CD4-positive, alpha-beta memory T cell (primary cell): ENCODE measurements at regions of chr1 and their contacts with region 1.

Region 1: GRCh38 chr1:206935491-206936067 is 10.7 kb downstream of the PIGR start:
- DNase-seq: peak in 1 of 5 donors; percentile 30
- H3K4me3 ChIP-seq: no peak overlapping the region
- H3K4me3 Mint-ChIP-seq: no peak overlapping the region
- H3K27ac ChIP-seq: no peak overlapping the region
- H3K27ac Mint-ChIP-seq: no peak overlapping the region
- H3K4me1 ChIP-seq: peaks cover 14% of the 10 kb centered on the region
- H3K4me1 Mint-ChIP-seq: peaks cover 9 to 25% (median 19%) of the 10 kb centered on the region in 4 donors
- H3K27me3 ChIP-seq: no peaks in the 10 kb centered on the region
- H3K27me3 Mint-ChIP-seq: no peaks in the 10 kb centered on the region

Region 2: DNA sequence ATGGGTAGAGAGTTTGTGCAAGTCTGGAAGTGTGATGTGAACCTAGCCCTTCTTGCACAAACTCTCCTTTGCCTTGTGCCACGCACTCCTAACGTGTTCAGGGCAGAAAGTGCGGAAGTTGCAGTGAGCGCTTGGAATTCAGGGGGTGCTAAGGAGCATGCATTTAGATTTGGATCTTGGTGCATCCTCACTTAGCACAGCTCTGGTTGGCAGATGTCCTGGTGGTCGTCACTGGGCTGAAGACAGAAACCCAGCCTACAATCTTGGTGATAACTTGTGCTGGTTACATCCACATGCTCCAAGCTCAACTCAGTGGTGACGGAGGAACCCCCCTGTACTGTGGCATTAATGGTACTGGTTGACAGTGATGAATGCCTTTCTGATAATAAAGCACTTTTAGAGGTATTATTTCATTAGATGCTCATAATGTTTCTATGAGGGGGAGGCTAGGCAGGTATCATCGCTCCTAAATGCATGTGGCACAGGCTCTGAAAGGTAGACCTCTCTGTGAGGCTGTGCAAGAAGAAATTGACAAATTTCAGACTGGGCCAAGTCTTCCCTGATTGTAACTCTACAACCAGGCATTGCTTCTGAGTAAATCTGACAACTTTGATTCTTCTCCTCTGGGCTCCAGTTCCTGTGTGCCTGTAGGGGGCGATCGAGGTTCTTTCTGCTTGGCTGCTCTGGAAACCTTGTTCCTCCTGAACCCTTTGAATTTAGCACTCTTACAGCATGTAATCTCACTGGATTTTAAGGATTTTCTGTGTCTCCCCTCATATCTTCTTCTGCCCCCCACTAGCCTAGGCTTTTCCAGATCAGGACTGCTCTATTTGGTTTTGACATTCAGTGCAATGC is 210.2 kb before region 1 on chr1:
- CTCF ChIA-PET with region 1: interaction called, 31 read pairs
- POLR2A ChIA-PET with region 1: no interaction called
- intact Hi-C with region 1: loop called (anchors 1 kb)
- DNase-seq: peak in 4 of 5 donors; percentile 47 to 60 (median 56)
- H3K4me3 ChIP-seq: no peak overlapping the region
- H3K4me3 Mint-ChIP-seq: peak overlapping the region in 2 of 8 donors; percentile 43 to 57
- H3K27ac ChIP-seq: no peak overlapping the region
- H3K27ac Mint-ChIP-seq: peak overlapping the region in 6 of 7 donors; percentile 60 to 90 (median 76)
- H3K4me1 ChIP-seq: peaks cover 32% of the 10 kb centered on the region
- H3K4me1 Mint-ChIP-seq: peaks cover 33 to 61% (median 46%) of the 10 kb centered on the region in 4 donors
- H3K27me3 ChIP-seq: no peaks in the 10 kb centered on the region
- H3K27me3 Mint-ChIP-seq: no peaks in the 10 kb centered on the region

Region 3: DNA sequence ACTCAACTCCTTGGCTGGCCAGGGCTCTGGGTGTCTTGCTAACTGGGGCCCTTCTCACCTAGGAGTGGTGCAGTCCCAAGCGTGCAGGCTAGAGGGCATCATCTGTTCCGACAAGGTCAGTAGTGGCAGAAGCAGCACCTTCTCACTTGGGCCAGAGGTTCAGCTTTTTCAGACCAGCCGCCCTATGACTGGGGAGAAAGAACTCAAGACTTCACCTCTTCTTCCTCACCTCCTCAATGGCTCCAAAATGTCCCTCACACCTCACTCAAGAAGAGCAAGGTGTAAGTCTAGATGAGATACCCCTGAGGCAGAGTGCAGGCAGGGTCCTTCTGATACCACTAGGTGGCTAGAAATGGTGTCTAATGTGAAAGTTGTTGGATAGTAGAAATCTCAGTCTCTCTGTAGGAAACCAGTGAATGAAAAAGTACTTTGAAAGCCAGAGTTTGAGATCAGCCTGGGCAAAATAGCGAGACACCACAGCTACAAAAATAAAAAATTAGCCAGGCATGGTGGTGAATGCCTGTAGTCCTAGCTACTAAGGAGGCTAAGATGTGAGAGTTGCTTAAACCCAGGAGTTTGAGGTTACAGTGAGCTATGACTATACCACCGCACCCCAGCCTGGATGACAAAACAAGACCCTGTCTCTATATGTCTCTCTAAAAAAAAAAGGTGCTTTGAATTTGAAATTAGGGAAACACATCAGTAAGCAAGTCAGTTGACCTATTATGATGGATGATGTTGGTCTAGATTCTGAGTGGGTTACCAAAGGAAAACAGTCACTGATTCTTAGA is 78.7 kb before region 1 on chr1:
- CTCF ChIA-PET with region 1: interaction called, 30 read pairs
- POLR2A ChIA-PET with region 1: interaction called, 3 read pairs
- intact Hi-C with region 1: no loop called
- DNase-seq: peak in 4 of 5 donors; percentile 8 to 22 (median 16)
- H3K4me3 ChIP-seq: no peak overlapping the region
- H3K4me3 Mint-ChIP-seq: no peak overlapping the region
- H3K27ac ChIP-seq: no peak overlapping the region
- H3K27ac Mint-ChIP-seq: no peak overlapping the region
- H3K4me1 ChIP-seq: peaks cover 7% of the 10 kb centered on the region
- H3K4me1 Mint-ChIP-seq: peaks cover 6 to 10% (median 8%) of the 10 kb centered on the region in 4 donors
- H3K27me3 ChIP-seq: no peaks in the 10 kb centered on the region
- H3K27me3 Mint-ChIP-seq: peaks cover 0 to 9% of the 10 kb centered on the region in 2 donors

Region 4: GRCh38 chr1:206872139-206872538 is 63.4 kb before region 1 on chr1:
- CTCF ChIA-PET with region 1: interaction called, 12 read pairs
- POLR2A ChIA-PET with region 1: no interaction called
- intact Hi-C with region 1: no loop called
- DNase-seq: no peak
- H3K4me3 ChIP-seq: no peak overlapping the region
- H3K4me3 Mint-ChIP-seq: no peak overlapping the region
- H3K27ac ChIP-seq: no peak overlapping the region
- H3K27ac Mint-ChIP-seq: no peak overlapping the region
- H3K4me1 ChIP-seq: no peaks in the 10 kb centered on the region
- H3K4me1 Mint-ChIP-seq: no peaks in the 10 kb centered on the region
- H3K27me3 ChIP-seq: no peaks in the 10 kb centered on the region
- H3K27me3 Mint-ChIP-seq: peaks cover 10 to 20% of the 10 kb centered on the region in 2 donors

Region 5: GRCh38 chr1:206895830-206896242 is 39.7 kb before region 1 on chr1:
- CTCF ChIA-PET with region 1: interaction called, 7 read pairs
- POLR2A ChIA-PET with region 1: interaction called, 21 read pairs
- intact Hi-C with region 1: no loop called
- DNase-seq: no peak
- H3K4me3 ChIP-seq: no peak overlapping the region
- H3K4me3 Mint-ChIP-seq: no peak overlapping the region
- H3K27ac ChIP-seq: no peak overlapping the region
- H3K27ac Mint-ChIP-seq: peak overlapping the region in 1 of 7 donors; percentile 55
- H3K4me1 ChIP-seq: peaks cover 9% of the 10 kb centered on the region
- H3K4me1 Mint-ChIP-seq: peaks cover 5 to 30% (median 17%) of the 10 kb centered on the region in 4 donors
- H3K27me3 ChIP-seq: no peaks in the 10 kb centered on the region
- H3K27me3 Mint-ChIP-seq: peaks cover 0 to 3% of the 10 kb centered on the region in 2 donors

Region 6: GRCh38 chr1:206925106-206925736 is 10.4 kb before region 1 on chr1:
- CTCF ChIA-PET with region 1: interaction called, 477 read pairs
- POLR2A ChIA-PET with region 1: interaction called, 179 read pairs
- intact Hi-C with region 1: loop called (anchors 1 kb)
- DNase-seq: peak; percentile 42 to 61 (median 55)
- H3K4me3 ChIP-seq: no peak overlapping the region
- H3K4me3 Mint-ChIP-seq: no peak overlapping the region
- H3K27ac ChIP-seq: no peak overlapping the region
- H3K27ac Mint-ChIP-seq: no peak overlapping the region
- H3K4me1 ChIP-seq: peaks cover 56% of the 10 kb centered on the region
- H3K4me1 Mint-ChIP-seq: peaks cover 13 to 27% (median 25%) of the 10 kb centered on the region in 4 donors
- H3K27me3 ChIP-seq: no peaks in the 10 kb centered on the region
- H3K27me3 Mint-ChIP-seq: no peaks in the 10 kb centered on the region

Region 7: GRCh38 chr1:206974140-206974539 is 38.6 kb after region 1 on chr1:
- CTCF ChIA-PET with region 1: interaction called, 96 read pairs
- POLR2A ChIA-PET with region 1: no interaction called
- intact Hi-C with region 1: no loop called
- DNase-seq: no peak
- H3K4me3 ChIP-seq: no peak overlapping the region
- H3K4me3 Mint-ChIP-seq: no peak overlapping the region
- H3K27ac ChIP-seq: no peak overlapping the region
- H3K27ac Mint-ChIP-seq: no peak overlapping the region
- H3K4me1 ChIP-seq: no peaks in the 10 kb centered on the region
- H3K4me1 Mint-ChIP-seq: no peaks in the 10 kb centered on the region
- H3K27me3 ChIP-seq: no peaks in the 10 kb centered on the region
- H3K27me3 Mint-ChIP-seq: peaks cover 4 to 6% of the 10 kb centered on the region in 2 donors